ENCODE measurements at regions of chr7 and their contacts with region 1.

Region 1: GRCh38 chr7:26200444-26201246 is at the start of gene HNRNPA2B1:
- DNase-seq: peak; percentile 95 to 99 (median 98)
- ATAC-seq: peak; percentile 72
- H3K4me3 ChIP-seq: peak within 1 kb of the TSS; percentile 74
- H3K4me3 Mint-ChIP-seq: peak within 1 kb of the TSS; percentile 92
- H3K27ac ChIP-seq: peak within 1 kb of the TSS; percentile 98
- H3K27ac Mint-ChIP-seq: peak within 1 kb of the TSS; percentile 99
- H3K4me1 ChIP-seq: peaks cover 22% of the 10 kb centered on the region
- H3K4me1 Mint-ChIP-seq: peaks cover 55% of the 10 kb centered on the region
- H3K27me3 ChIP-seq: no peaks in the 10 kb centered on the region
- H3K27me3 Mint-ChIP-seq: peaks cover 7% of the 10 kb centered on the region
- CTCF ChIP-seq: no peak
- total RNA-seq, gene HNRNPA2B1: 282 to 299 TPM

Region 2: DNA sequence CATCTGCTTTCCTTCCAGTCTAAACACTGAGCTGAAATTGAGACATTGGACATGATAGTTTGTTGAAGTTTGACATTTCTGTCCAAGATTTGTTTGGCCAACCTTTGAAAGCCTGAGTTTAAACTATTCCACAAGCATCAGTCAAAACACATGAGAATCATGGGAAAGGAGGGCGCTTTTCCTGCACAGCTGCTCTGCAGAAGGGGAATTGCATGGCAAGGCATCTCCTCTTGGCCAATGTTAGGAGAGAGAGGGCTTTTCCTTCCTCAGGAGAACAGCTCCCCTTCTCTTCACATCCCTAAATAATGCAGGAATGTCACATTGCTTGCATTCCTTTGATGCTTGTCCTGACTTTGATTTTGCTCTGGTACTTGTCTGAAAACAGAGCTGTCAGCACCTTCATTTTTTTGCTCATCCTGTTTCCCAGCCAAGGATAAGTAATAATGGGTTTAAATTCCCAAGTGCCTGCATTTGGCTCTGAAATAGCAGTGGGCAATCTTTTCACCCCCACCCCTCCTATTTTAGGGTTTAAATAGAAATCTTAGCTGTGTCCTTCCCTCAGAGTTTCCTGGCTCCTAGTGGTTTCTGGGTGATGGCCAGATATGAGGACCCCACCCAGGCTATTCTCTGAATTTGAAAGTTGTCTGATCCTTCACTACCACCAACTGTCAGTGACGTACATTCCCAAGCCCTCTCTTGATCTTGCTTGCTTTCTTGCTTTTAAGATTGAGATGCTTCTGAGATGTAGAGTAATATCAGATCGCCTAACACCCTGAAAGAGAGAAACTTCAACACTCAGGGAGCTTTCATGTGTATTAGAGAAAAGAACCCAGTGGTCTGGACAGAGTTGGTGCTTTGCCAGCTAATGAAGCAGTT is 897.1 kb before region 1 on chr7:
- CTCF ChIA-PET with region 1: no interaction called
- POLR2A ChIA-PET with region 1: no interaction called
- intact Hi-C with region 1: no loop called
- DNase-seq: no peak
- ATAC-seq: no peak
- H3K4me3 ChIP-seq: no peak overlapping the region
- H3K4me3 Mint-ChIP-seq: no peak overlapping the region
- H3K27ac ChIP-seq: no peak overlapping the region
- H3K27ac Mint-ChIP-seq: no peak overlapping the region
- H3K4me1 ChIP-seq: no peaks in the 10 kb centered on the region
- H3K4me1 Mint-ChIP-seq: no peaks in the 10 kb centered on the region
- H3K27me3 ChIP-seq: no peaks in the 10 kb centered on the region
- H3K27me3 Mint-ChIP-seq: peaks cover 4% of the 10 kb centered on the region
- CTCF ChIP-seq: no peak

Region 3: GRCh38 chr7:25894902-25895791 is 305.5 kb before region 1 on chr7:
- CTCF ChIA-PET with region 1: no interaction called
- POLR2A ChIA-PET with region 1: interaction called, 8 read pairs
- intact Hi-C with region 1: loop called (anchors 5 to 10 kb)
- DNase-seq: peak; percentile 38 to 80 (median 56)
- ATAC-seq: peak; percentile 54
- H3K4me3 ChIP-seq: peak overlapping the region; percentile 9
- H3K4me3 Mint-ChIP-seq: peak overlapping the region; percentile 49
- H3K27ac ChIP-seq: no peak overlapping the region
- H3K27ac Mint-ChIP-seq: no peak overlapping the region
- H3K4me1 ChIP-seq: peaks cover 25% of the 10 kb centered on the region
- H3K4me1 Mint-ChIP-seq: peaks cover 31% of the 10 kb centered on the region
- H3K27me3 ChIP-seq: no peaks in the 10 kb centered on the region
- H3K27me3 Mint-ChIP-seq: no peaks in the 10 kb centered on the region
- CTCF ChIP-seq: peak; percentile 79

Region 4: DNA sequence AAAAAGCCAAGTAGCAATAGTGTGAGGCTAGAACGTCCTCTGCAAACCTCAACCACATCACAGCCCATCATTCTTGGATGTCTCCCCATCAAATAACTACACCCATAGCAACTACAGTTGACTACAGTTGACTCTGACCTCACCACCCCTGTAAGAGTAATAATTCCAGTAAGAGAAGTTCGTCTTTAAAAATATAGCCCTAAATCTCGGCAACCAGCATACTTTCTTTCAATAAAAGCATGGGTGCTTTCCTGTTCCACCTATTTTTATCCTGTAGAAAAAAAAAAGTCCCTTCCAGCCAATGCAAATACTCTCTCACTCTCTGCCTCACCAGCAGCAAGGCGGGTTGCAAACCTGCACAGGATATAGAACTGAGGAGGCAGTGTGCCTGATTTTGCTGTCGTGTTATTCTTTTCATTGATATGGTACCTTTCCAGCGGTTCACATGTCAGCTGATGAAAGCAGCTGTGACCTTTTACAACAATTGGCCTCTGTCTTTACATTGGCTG is 236.1 kb before region 1 on chr7:
- CTCF ChIA-PET with region 1: no interaction called
- POLR2A ChIA-PET with region 1: no interaction called
- intact Hi-C with region 1: no loop called
- DNase-seq: no peak
- ATAC-seq: no peak
- H3K4me3 ChIP-seq: no peak overlapping the region
- H3K4me3 Mint-ChIP-seq: no peak overlapping the region
- H3K27ac ChIP-seq: no peak overlapping the region
- H3K27ac Mint-ChIP-seq: no peak overlapping the region
- H3K4me1 ChIP-seq: peaks cover 19% of the 10 kb centered on the region
- H3K4me1 Mint-ChIP-seq: peaks cover 19% of the 10 kb centered on the region
- H3K27me3 ChIP-seq: peaks cover 4 to 17% of the 10 kb centered on the region in 2 experiments
- H3K27me3 Mint-ChIP-seq: peaks cover 60% of the 10 kb centered on the region
- CTCF ChIP-seq: no peak

Region 5: DNA sequence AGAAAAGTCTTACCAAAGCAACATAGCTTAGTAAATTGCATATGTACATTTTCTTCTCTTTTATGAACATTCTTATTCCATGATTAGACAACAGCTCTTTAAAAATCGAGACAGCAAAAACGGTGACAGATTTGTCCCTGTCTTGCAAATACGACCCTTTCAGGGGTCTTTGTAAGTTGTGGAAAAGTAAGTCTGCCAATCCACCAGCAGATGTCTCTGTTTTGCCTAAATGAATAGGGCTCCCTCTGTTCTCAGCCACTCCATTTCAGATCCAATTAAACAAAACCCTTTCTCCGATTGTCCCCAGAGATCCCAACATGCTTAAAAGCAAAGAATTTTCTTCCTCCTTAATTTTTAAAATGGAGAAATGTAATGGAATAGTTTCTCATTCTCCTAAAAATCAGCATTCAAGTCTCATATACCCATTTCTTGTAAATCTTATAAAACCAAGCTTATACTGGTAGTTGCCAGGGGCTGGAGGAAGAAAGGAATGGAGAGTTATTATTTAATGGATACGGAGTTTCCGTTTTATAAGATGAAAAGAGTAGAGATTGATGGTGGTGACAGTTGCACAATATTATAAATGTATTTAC is 109.6 kb before region 1 on chr7:
- CTCF ChIA-PET with region 1: interaction called, 30 read pairs
- POLR2A ChIA-PET with region 1: interaction called, 98 read pairs
- intact Hi-C with region 1: loop called (anchors 1 to 2 kb)
- DNase-seq: peak in 4 of 14 experiments; percentile 31 to 73 (median 64)
- ATAC-seq: peak; percentile 71
- H3K4me3 ChIP-seq: no peak overlapping the region
- H3K4me3 Mint-ChIP-seq: no peak overlapping the region
- H3K27ac ChIP-seq: no peak overlapping the region
- H3K27ac Mint-ChIP-seq: no peak overlapping the region
- H3K4me1 ChIP-seq: peaks cover 7% of the 10 kb centered on the region
- H3K4me1 Mint-ChIP-seq: peaks cover 40% of the 10 kb centered on the region
- H3K27me3 ChIP-seq: no peaks in the 10 kb centered on the region
- H3K27me3 Mint-ChIP-seq: no peaks in the 10 kb centered on the region
- CTCF ChIP-seq: peak; percentile 92

Region 6: DNA sequence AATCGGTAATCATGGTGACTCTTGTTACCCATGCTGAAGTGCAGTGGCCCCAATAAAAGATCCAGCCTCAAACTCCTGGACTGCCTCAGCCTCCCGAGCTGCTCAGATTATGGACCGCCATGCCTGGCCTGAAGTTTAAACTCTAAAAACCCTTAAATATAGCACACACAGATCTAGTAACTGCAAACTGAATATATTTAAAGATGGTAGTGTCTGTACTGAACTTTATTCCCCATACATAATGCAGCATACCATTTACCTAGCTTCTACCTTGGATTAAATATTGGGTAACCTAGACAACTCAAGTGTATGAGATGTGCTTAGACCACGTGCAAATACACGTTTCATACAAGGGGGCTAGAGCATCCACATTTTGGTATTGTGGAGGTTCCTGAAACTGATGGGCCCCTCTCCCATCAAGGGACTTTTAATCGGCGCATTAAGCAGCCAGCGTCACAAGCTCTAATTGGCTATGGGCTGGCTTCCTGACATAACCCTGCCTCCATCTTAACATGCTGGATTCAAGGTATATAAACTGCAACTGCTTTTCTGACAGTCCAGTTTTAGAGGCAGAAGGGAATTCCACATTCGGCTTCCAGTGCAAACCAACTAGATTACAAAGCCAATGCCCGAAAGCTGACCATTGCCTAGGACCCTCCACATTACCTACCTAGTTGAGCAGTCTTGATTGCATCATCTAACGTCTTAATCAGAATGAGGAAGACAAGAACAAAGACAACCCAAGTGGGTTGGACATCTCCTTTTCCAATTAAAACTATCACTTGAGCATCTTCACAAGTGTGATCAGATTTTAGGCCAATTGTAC is 13.1 kb before region 1 on chr7:
- CTCF ChIA-PET with region 1: interaction called, 17 read pairs
- POLR2A ChIA-PET with region 1: interaction called, 183 read pairs
- intact Hi-C with region 1: loop called in 1 of 2 experiments (anchors 1 kb)
- DNase-seq: no peak
- ATAC-seq: peak; percentile 18
- H3K4me3 ChIP-seq: no peak overlapping the region
- H3K4me3 Mint-ChIP-seq: peak overlapping the region; percentile 21
- H3K27ac ChIP-seq: peak overlapping the region in 1 of 2 donors; percentile 0
- H3K27ac Mint-ChIP-seq: peak overlapping the region; percentile 54
- H3K4me1 ChIP-seq: peaks cover 21% of the 10 kb centered on the region
- H3K4me1 Mint-ChIP-seq: peaks cover 90% of the 10 kb centered on the region
- H3K27me3 ChIP-seq: no peaks in the 10 kb centered on the region
- H3K27me3 Mint-ChIP-seq: no peaks in the 10 kb centered on the region
- CTCF ChIP-seq: no peak

Region 7: GRCh38 chr7:26667500-26668133 is 467.0 kb after region 1 on chr7:
- CTCF ChIA-PET with region 1: no interaction called
- POLR2A ChIA-PET with region 1: no interaction called
- intact Hi-C with region 1: loop called in 1 of 2 experiments (anchors 10 kb)
- DNase-seq: peak in 12 of 14 experiments; percentile 15 to 82 (median 30)
- ATAC-seq: peak; percentile 61
- H3K4me3 ChIP-seq: no peak overlapping the region
- H3K4me3 Mint-ChIP-seq: no peak overlapping the region
- H3K27ac ChIP-seq: no peak overlapping the region
- H3K27ac Mint-ChIP-seq: no peak overlapping the region
- H3K4me1 ChIP-seq: no peaks in the 10 kb centered on the region
- H3K4me1 Mint-ChIP-seq: peaks cover 19% of the 10 kb centered on the region
- H3K27me3 ChIP-seq: no peaks in the 10 kb centered on the region
- H3K27me3 Mint-ChIP-seq: peaks cover 15% of the 10 kb centered on the region
- CTCF ChIP-seq: peak; percentile 75

Measured in CD4-positive, alpha-beta T cell (primary cell).